Activated CD8-positive, alpha-beta T cell treated with anti-CD3 and anti-CD28 coated beads for 36 hours (primary cell): ENCODE measurements at regions of chr12 and their contacts with region 1.

Region 1: GRCh38 chr12:52870351-52871290 is 21.8 kb upstream of the KRT78 start:
- DNase-seq: peak; percentile 89
- ATAC-seq: peak; percentile 75
- H3K4me3 Mint-ChIP-seq: no peak overlapping the region
- H3K27ac Mint-ChIP-seq: no peak overlapping the region
- H3K4me1 Mint-ChIP-seq: peaks cover 29% of the 10 kb centered on the region
- H3K27me3 Mint-ChIP-seq: no peaks in the 10 kb centered on the region
- CTCF ChIP-seq: peak; percentile 87

Region 2: GRCh38 chr12:52582971-52583456 is 287.6 kb before region 1 on chr12:
- CTCF ChIA-PET with region 1: interaction called, 325 read pairs
- POLR2A ChIA-PET with region 1: no interaction called
- intact Hi-C with region 1: loop called (anchors 2 kb)
- DNase-seq: peak; percentile 82
- ATAC-seq: peak; percentile 83
- H3K4me3 Mint-ChIP-seq: no peak overlapping the region
- H3K27ac Mint-ChIP-seq: no peak overlapping the region
- H3K4me1 Mint-ChIP-seq: peaks cover 34% of the 10 kb centered on the region
- H3K27me3 Mint-ChIP-seq: no peaks in the 10 kb centered on the region
- CTCF ChIP-seq: peak; percentile 77

Region 3: GRCh38 chr12:52715416-52715815 is 155.2 kb before region 1 on chr12:
- CTCF ChIA-PET with region 1: interaction called, 13 read pairs
- POLR2A ChIA-PET with region 1: no interaction called
- intact Hi-C with region 1: loop called (anchors 10 kb)
- DNase-seq: peak; percentile 4
- ATAC-seq: no peak
- H3K4me3 Mint-ChIP-seq: no peak overlapping the region
- H3K27ac Mint-ChIP-seq: no peak overlapping the region
- H3K4me1 Mint-ChIP-seq: peaks cover 7% of the 10 kb centered on the region
- H3K27me3 Mint-ChIP-seq: peaks cover 26% of the 10 kb centered on the region
- CTCF ChIP-seq: no peak

Region 4: GRCh38 chr12:52837413-52837741 is 33.2 kb before region 1 on chr12:
- CTCF ChIA-PET with region 1: interaction called, 11 read pairs
- POLR2A ChIA-PET with region 1: no interaction called
- intact Hi-C with region 1: no loop called
- DNase-seq: peak; percentile 39
- ATAC-seq: no peak
- H3K4me3 Mint-ChIP-seq: no peak overlapping the region
- H3K27ac Mint-ChIP-seq: peak overlapping the region; percentile 90
- H3K4me1 Mint-ChIP-seq: peaks cover 42% of the 10 kb centered on the region
- H3K27me3 Mint-ChIP-seq: peaks cover 1% of the 10 kb centered on the region
- CTCF ChIP-seq: no peak

Region 5: DNA sequence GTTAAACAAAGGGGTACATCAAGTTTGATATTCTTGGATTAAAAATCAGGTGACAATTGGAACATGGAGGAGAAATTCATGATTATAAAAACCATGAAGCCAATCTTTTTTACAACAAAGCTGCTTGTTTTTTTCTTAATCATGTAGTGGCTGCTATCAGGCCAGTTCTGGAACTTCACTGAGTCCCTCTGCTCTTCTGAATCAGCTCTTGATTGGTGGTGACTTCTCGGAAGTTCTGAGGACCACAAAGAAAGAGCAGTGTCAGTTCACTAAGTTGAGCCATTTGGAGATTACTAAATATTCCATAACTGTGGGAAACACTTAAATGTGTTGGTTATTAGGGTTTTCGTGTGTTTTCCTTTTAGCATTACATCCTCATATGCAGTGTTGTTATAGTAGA is 144.1 kb after region 1 on chr12:
- CTCF ChIA-PET with region 1: no interaction called
- POLR2A ChIA-PET with region 1: no interaction called
- intact Hi-C with region 1: no loop called
- DNase-seq: no peak
- ATAC-seq: peak; percentile 30
- H3K4me3 Mint-ChIP-seq: no peak overlapping the region
- H3K27ac Mint-ChIP-seq: peak overlapping the region; percentile 77
- H3K4me1 Mint-ChIP-seq: peaks cover 52% of the 10 kb centered on the region
- H3K27me3 Mint-ChIP-seq: no peaks in the 10 kb centered on the region
- CTCF ChIP-seq: no peak